Heart left ventricle (tissue), 16 donors: ENCODE measurements at regions of chr4 and their contacts with region 1.

Region 1: DNA sequence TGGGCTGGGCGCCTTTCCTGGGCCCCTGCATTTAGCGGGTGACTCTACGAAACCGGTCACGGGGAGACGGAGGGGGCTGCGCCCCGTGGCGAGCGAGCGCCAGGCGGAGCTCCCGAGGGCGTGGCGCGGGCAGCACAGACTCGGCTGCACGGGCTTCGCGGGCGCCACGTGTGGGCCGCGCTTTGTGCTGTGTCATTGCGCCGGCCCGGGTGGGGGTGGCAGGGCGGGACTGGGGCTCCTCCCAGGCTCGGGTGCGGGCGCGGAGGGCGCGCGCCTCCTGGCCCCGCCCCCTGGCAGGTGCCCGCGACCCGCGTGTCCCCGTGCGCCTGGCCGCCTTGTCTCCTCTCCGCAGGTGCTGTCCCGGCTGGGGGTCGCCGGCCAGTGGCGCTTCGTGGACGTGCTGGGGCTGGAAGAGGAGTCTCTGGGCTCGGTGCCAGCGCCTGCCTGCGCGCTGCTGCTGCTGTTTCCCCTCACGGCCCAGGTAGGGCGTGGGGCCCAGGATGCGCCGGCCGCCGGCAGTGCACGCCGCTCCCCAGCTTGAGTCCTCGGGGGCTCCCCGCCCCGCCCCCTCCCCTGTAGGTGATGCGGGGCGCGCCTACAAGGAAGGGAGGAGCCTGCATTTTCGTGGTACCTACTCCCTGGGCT is 651 bp downstream of the UCHL1 start:
- DNase-seq: peak; percentile 21 to 62 (median 42)
- ATAC-seq: peak in 3 of 4 donors; percentile 62 to 89 (median 83)
- H3K4me3 ChIP-seq: peak overlapping the region; percentile 42 to 67 (median 54)
- H3K27ac ChIP-seq: no peak overlapping the region
- H3K4me1 ChIP-seq: peaks cover 3 to 23% (median 14%) of the 10 kb centered on the region in 12 donors
- H3K27me3 ChIP-seq: peaks cover 4 to 43% (median 13%) of the 10 kb centered on the region in 9 donors
- CTCF ChIP-seq: no peak
- POLR2A ChIP-seq: no peak

Region 2: DNA sequence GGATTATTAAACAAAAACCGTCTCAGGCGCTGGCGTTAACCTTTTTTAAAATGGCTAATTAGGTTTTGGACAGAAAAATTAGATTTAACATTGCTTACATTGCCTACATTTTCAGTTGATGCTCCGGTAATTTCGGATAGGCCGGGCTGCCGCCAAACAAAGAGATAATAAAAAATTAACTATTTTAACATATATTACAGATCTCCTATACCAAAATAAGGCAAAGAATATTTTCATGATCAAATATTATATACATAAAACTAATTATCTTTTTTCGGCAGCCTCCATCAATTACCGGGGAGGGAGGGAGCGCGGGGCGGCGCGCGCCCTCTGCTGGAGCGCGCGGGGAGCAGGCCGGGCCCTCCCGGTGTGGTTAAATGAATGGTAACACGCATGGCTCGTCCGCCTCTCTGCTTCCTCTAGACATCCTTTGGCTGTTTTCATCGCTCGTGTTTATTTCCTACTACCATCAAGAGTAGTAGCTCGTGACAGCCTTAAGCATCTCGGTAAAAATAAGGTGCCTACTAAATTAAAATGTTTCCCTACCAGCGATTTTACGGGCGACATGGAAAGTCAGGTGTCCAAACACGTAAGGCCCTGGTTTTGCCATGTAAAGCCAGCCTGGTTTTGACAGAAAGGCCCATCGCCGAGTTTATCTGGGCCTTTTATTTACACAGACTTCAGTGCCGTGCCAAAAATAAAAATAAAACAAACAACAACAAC is 625.4 kb after region 1 on chr4:
- intact Hi-C with region 1: loop called in 3 of 10 experiments (anchors 5 to 10 kb)
- DNase-seq: peak in 2 of 5 donors; percentile 40 to 73
- ATAC-seq: peak; percentile 60 to 92 (median 82)
- H3K4me3 ChIP-seq: peak overlapping the region in 11 of 12 donors; percentile 10 to 53 (median 40)
- H3K27ac ChIP-seq: no peak overlapping the region
- H3K4me1 ChIP-seq: peaks cover 4 to 35% (median 22%) of the 10 kb centered on the region in 12 donors
- H3K27me3 ChIP-seq: peaks cover 32 to 75% (median 62%) of the 10 kb centered on the region in 9 donors
- CTCF ChIP-seq: peak; percentile 84 to 99 (median 94)
- POLR2A ChIP-seq: no peak

Region 3: GRCh38 chr4:41887821-41888686 is 630.7 kb after region 1 on chr4:
- intact Hi-C with region 1: loop called in 3 of 10 experiments (anchors 5 to 10 kb)
- DNase-seq: no peak
- ATAC-seq: no peak
- H3K4me3 ChIP-seq: no peak overlapping the region
- H3K27ac ChIP-seq: no peak overlapping the region
- H3K4me1 ChIP-seq: no peaks in the 10 kb centered on the region
- H3K27me3 ChIP-seq: peaks cover 0 to 45% (median 15%) of the 10 kb centered on the region in 9 donors
- CTCF ChIP-seq: peak; percentile 79 to 97 (median 90)
- POLR2A ChIP-seq: no peak